Caco-2 (cell line): ENCODE measurements at regions of chr21 and their contacts with region 1.

Region 1: GRCh38 chr21:16037421-16037955 is 307.7 kb downstream of the USP25 start:
- DNase-seq: no peak
- H3K4me3 ChIP-seq: no peak overlapping the region
- H3K4me3 Mint-ChIP-seq: no peak overlapping the region
- H3K27ac Mint-ChIP-seq: no peak overlapping the region
- H3K4me1 ChIP-seq: no peaks in the 10 kb centered on the region
- H3K4me1 Mint-ChIP-seq: no peaks in the 10 kb centered on the region
- H3K27me3 ChIP-seq: no peaks in the 10 kb centered on the region
- H3K27me3 Mint-ChIP-seq: no peaks in the 10 kb centered on the region
- CTCF ChIP-seq: no peak

Region 2: DNA sequence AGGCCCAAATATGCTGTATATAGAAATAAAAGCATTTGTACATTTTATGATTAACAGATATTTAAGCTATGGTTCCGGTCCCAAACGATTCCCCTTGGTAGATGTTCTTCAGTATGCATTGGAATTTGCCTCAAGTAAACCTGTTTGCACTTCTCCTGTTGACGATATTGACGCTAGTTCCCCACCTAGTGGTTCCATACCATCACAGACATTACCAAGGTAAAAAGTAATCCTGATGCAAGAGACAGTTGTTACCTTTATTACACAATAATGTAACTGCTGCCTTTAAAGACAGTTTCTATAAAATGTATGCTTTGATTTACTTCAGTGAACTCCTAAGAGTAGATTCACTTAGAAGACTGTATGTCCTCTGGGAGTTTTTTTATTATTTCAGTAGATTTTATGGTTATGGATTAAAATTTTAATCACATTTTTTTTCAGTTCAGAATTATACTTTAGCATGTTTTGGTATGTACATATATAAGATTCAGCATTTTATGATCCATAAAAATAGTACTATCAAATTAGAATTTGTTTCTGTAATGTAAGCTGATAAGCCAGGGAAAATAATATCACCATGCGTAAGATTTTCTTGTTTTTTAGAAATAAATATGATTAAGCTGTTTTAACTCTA is 211.2 kb before region 1 on chr21:
- CTCF ChIA-PET with region 1: no interaction called
- POLR2A ChIA-PET with region 1: no interaction called
- intact Hi-C with region 1: no loop called
- DNase-seq: peak; percentile 43 to 71
- H3K4me3 ChIP-seq: no peak overlapping the region
- H3K4me3 Mint-ChIP-seq: no peak overlapping the region
- H3K27ac Mint-ChIP-seq: no peak overlapping the region
- H3K4me1 ChIP-seq: no peaks in the 10 kb centered on the region
- H3K4me1 Mint-ChIP-seq: no peaks in the 10 kb centered on the region
- H3K27me3 ChIP-seq: no peaks in the 10 kb centered on the region
- H3K27me3 Mint-ChIP-seq: no peaks in the 10 kb centered on the region
- CTCF ChIP-seq: peak; percentile 63 to 76

Region 3: GRCh38 chr21:16022921-16023320 is 14.6 kb before region 1 on chr21:
- CTCF ChIA-PET with region 1: no interaction called
- POLR2A ChIA-PET with region 1: no interaction called
- intact Hi-C with region 1: no loop called
- DNase-seq: no peak
- H3K4me3 ChIP-seq: no peak overlapping the region
- H3K4me3 Mint-ChIP-seq: no peak overlapping the region
- H3K27ac Mint-ChIP-seq: no peak overlapping the region
- H3K4me1 ChIP-seq: no peaks in the 10 kb centered on the region
- H3K4me1 Mint-ChIP-seq: no peaks in the 10 kb centered on the region
- H3K27me3 ChIP-seq: no peaks in the 10 kb centered on the region
- H3K27me3 Mint-ChIP-seq: peaks cover 7% of the 10 kb centered on the region
- CTCF ChIP-seq: no peak

Region 4: DNA sequence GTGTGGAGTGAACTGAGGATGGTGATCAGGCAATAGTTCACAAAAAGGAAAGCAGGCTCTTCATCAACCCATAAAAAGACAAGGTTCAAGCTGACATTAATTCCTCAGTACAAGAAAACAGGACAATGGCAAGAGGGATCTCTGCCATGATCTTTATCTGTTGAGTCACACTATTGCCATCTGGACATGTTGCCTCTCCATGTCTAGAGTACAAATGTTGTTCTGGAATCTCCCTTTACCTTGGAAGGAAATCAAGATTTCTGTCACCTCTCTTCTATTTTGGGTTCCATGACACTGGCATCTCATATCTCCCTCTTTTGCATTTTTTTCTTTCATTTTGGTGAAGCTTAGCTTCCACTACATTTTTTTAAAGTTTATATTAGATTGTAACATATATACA is 21.4 kb after region 1 on chr21:
- CTCF ChIA-PET with region 1: no interaction called
- POLR2A ChIA-PET with region 1: no interaction called
- intact Hi-C with region 1: no loop called
- DNase-seq: no peak
- H3K4me3 ChIP-seq: no peak overlapping the region
- H3K4me3 Mint-ChIP-seq: no peak overlapping the region
- H3K27ac Mint-ChIP-seq: no peak overlapping the region
- H3K4me1 ChIP-seq: no peaks in the 10 kb centered on the region
- H3K4me1 Mint-ChIP-seq: no peaks in the 10 kb centered on the region
- H3K27me3 ChIP-seq: no peaks in the 10 kb centered on the region
- H3K27me3 Mint-ChIP-seq: no peaks in the 10 kb centered on the region
- CTCF ChIP-seq: no peak

Region 5: GRCh38 chr21:16082038-16082816 is 44.7 kb after region 1 on chr21:
- CTCF ChIA-PET with region 1: interaction called, 13 read pairs
- POLR2A ChIA-PET with region 1: no interaction called
- intact Hi-C with region 1: no loop called
- DNase-seq: no peak
- H3K4me3 ChIP-seq: no peak overlapping the region
- H3K4me3 Mint-ChIP-seq: no peak overlapping the region
- H3K27ac Mint-ChIP-seq: no peak overlapping the region
- H3K4me1 ChIP-seq: no peaks in the 10 kb centered on the region
- H3K4me1 Mint-ChIP-seq: no peaks in the 10 kb centered on the region
- H3K27me3 ChIP-seq: no peaks in the 10 kb centered on the region
- H3K27me3 Mint-ChIP-seq: no peaks in the 10 kb centered on the region
- CTCF ChIP-seq: peak in 1 of 2 experiments; percentile 47